Heart left ventricle (tissue), 16 donors: ENCODE measurements at regions of chr1 and their contacts with region 1.

Region 1: GRCh38 chr1:180863158-180863775 is 49.4 kb upstream of the KIAA1614 start:
- DNase-seq: no peak
- ATAC-seq: peak in 2 of 4 donors; percentile 34 to 39
- H3K4me3 ChIP-seq: no peak overlapping the region
- H3K27ac ChIP-seq: peak overlapping the region in 1 of 12 donors; percentile 32
- H3K4me1 ChIP-seq: peaks cover 0 to 16% (median 0%) of the 10 kb centered on the region in 12 donors
- H3K27me3 ChIP-seq: no peaks in the 10 kb centered on the region
- CTCF ChIP-seq: peak; percentile 67 to 83 (median 80)
- POLR2A ChIP-seq: no peak

Region 2: DNA sequence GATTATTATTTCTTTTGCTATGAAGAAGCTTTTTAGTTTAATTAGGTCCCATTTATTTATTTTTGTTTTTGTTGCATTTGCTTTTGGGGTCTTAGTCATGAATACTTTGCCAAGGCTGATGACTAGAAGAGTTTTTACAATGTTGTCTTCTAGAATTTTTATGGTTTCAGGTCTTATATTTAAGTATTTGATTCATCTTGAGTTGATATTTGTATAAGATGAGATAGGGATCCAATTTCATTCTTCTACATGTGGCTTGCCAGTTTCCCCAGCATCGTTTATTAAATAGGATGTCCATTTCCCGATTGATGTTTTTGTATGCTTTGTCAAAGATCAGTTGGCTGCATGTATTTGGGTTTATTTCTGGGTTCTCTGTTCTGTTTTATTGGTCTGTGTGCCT is 352.4 kb before region 1 on chr1:
- intact Hi-C with region 1: loop called (anchors 2 to 5 kb)
- DNase-seq: no peak
- ATAC-seq: no peak
- H3K4me3 ChIP-seq: no peak overlapping the region
- H3K27ac ChIP-seq: no peak overlapping the region
- H3K4me1 ChIP-seq: peaks cover 0 to 5% (median under 1%) of the 10 kb centered on the region in 12 donors
- H3K27me3 ChIP-seq: no peaks in the 10 kb centered on the region
- CTCF ChIP-seq: no peak
- POLR2A ChIP-seq: no peak

Region 3: DNA sequence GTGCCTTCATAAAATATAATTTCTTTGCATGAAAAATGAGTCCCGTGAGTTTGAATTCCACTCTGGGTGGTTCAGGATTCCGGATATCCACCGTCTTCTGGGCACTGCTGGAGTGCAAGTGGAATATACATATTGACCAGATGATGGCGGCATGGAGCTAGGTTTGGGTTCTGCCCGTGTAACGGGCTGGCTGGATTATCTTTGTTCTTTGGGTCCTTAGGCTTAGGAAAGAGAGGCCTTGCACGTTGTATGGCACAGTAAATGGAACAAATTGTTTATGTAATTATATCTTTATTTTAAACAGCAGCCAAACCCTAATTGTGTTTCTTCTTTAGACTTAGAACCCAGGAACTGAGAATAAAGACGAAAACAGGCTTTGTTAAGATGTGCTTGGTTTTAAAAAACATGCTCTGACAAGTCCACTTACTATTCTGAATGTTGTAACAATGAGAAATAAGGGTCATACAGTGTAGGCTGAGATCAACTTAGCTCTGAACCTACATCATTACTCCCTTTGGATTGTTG is 347.3 kb before region 1 on chr1:
- intact Hi-C with region 1: loop called (anchors 2 to 5 kb)
- DNase-seq: peak in 4 of 5 donors; percentile 61 to 69 (median 66)
- ATAC-seq: peak; percentile 90 to 98 (median 96)
- H3K4me3 ChIP-seq: no peak overlapping the region
- H3K27ac ChIP-seq: peak overlapping the region in 1 of 12 donors; percentile 21
- H3K4me1 ChIP-seq: peaks cover 0 to 19% (median 10%) of the 10 kb centered on the region in 12 donors
- H3K27me3 ChIP-seq: no peaks in the 10 kb centered on the region
- CTCF ChIP-seq: peak; percentile 73 to 91 (median 88)
- POLR2A ChIP-seq: no peak

Region 4: GRCh38 chr1:180533266-180533987 is 329.8 kb before region 1 on chr1:
- intact Hi-C with region 1: loop called (anchors 5 kb)
- DNase-seq: peak; percentile 61 to 79 (median 75)
- ATAC-seq: peak in 3 of 4 donors; percentile 73 to 84 (median 79)
- H3K4me3 ChIP-seq: no peak overlapping the region
- H3K27ac ChIP-seq: peak overlapping the region in 7 of 12 donors; percentile 5 to 40 (median 17)
- H3K4me1 ChIP-seq: peaks cover 0 to 29% (median 6%) of the 10 kb centered on the region in 12 donors
- H3K27me3 ChIP-seq: no peaks in the 10 kb centered on the region
- CTCF ChIP-seq: peak; percentile 78 to 93 (median 86)
- POLR2A ChIP-seq: no peak

Region 5: DNA sequence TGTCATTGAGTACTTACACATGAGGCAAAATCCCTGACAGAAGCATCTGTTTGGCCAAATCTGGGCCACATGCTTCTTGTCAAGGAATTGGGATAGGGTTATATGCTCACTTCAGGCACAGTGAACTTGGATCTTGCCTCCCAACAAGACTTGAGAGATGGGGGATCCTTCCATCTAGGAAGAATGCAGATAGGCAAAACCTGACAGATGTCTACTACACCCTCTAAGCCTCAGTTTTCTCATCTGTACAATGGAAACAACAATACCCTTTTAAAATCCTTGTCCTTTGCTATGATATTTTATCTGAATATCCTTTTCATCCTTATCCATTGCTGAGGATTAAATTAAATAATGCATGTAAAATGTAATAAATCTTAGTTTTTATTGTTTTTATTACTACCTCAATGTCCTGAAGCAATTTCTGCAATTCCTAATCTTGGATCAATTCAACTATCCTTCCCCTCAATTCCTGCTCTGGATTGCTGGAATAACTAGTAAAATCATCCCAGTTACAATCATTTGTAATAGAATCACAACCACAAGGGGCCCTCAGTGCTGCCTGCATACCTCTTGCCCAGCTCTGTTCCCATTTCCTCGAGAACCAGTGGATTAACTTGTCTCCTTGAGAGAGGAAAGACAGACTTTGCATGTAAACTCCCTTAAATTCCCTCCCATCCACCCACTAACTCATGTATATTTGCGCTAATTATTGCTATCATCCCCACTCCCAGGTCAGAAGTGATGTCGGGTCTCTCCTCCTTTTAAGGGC is 239.5 kb before region 1 on chr1:
- intact Hi-C with region 1: loop called in 2 of 10 experiments (anchors 5 kb)
- DNase-seq: no peak
- ATAC-seq: no peak
- H3K4me3 ChIP-seq: no peak overlapping the region
- H3K27ac ChIP-seq: no peak overlapping the region
- H3K4me1 ChIP-seq: no peaks in the 10 kb centered on the region
- H3K27me3 ChIP-seq: no peaks in the 10 kb centered on the region
- CTCF ChIP-seq: peak in 8 of 12 donors; percentile 7 to 41 (median 18)
- POLR2A ChIP-seq: no peak

Region 6: GRCh38 chr1:180631766-180632325 is 231.4 kb before region 1 on chr1 and contains the start of gene XPR1:
- intact Hi-C with region 1: loop called (anchors 5 kb)
- DNase-seq: peak; percentile 98 to 99 (median 98)
- ATAC-seq: peak; percentile 99 to 100 (median 99)
- H3K4me3 ChIP-seq: peak within 1 kb of the TSS; percentile 69 to 98 (median 87)
- H3K27ac ChIP-seq: peak within 1 kb of the TSS; percentile 77 to 97 (median 91)
- H3K4me1 ChIP-seq: peaks cover 0 to 42% (median 25%) of the 10 kb centered on the region in 12 donors
- H3K27me3 ChIP-seq: no peaks in the 10 kb centered on the region
- CTCF ChIP-seq: peak in 8 of 12 donors; percentile 10 to 51 (median 38)
- POLR2A ChIP-seq: peak; percentile 86 to 98
- total RNA-seq, gene XPR1: 55.4 to 163 (median 62.5) TPM